ENCODE measurements at regions of chr17 and their contacts with region 1.

Region 1: DNA sequence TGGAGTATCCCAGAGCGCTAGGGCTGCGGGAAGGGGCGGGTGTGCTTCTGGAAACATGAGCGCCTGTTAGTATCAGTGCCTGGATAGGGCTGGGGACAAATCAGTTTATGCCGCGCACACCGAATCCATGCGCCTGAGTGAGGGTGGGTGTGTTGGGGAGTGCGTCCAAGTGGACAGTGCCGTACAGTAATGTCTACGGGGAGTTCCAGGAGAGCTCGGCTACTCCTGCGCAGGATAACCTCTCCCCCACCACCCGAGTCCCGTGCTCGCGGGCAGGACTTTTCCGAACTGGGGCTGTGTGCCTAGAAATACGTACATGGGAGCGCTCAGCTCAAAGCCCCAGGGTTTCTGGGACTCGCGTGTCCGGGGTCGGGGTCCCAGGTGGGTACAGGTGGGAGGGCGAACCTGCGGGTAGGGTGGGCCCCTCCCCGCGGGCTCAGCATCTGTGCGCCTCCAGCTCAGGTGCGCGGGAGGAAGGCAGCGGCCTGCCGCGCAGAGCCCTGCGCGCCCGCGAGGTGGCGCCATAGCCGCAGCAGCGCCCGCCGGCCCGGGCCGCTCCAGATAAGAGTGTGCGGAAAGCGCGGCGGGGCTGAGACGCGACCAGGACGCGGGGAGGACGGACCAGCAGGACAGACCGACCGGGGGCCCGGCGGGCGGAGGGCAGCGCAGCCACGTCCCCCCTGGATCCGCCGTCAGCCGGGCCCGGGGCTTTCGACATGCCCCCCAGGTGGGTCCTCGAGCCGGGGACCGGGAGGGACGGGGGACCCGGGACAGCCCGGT is at the start of gene HIC1:
- DNase-seq: peak; percentile 64 to 88 (median 73)
- ATAC-seq: peak; percentile 45
- H3K4me3 ChIP-seq: peak within 1 kb of the TSS; percentile 48 to 65
- H3K4me3 Mint-ChIP-seq: peak within 1 kb of the TSS; percentile 78
- H3K27ac ChIP-seq: peak within 1 kb of the TSS; percentile 56 to 74
- H3K27ac Mint-ChIP-seq: peak within 1 kb of the TSS; percentile 81
- H3K4me1 ChIP-seq: peaks cover 64% of the 10 kb centered on the region
- H3K4me1 Mint-ChIP-seq: peaks cover 31% of the 10 kb centered on the region
- H3K27me3 ChIP-seq: peaks cover 0 to 2% of the 10 kb centered on the region in 2 experiments
- H3K27me3 Mint-ChIP-seq: peaks cover 13% of the 10 kb centered on the region
- CTCF ChIP-seq: peak; percentile 85
- total RNA-seq, gene HIC1: 12.1 to 13.0 TPM

Region 2: GRCh38 chr17:1546292-1546922 is 508.3 kb before region 1 on chr17:
- CTCF ChIA-PET with region 1: no interaction called
- POLR2A ChIA-PET with region 1: no interaction called
- intact Hi-C with region 1: no loop called
- DNase-seq: no peak
- ATAC-seq: no peak
- H3K4me3 ChIP-seq: no peak overlapping the region
- H3K4me3 Mint-ChIP-seq: no peak overlapping the region
- H3K27ac ChIP-seq: no peak overlapping the region
- H3K27ac Mint-ChIP-seq: no peak overlapping the region
- H3K4me1 ChIP-seq: no peaks in the 10 kb centered on the region
- H3K4me1 Mint-ChIP-seq: no peaks in the 10 kb centered on the region
- H3K27me3 ChIP-seq: no peaks in the 10 kb centered on the region
- H3K27me3 Mint-ChIP-seq: no peaks in the 10 kb centered on the region
- CTCF ChIP-seq: no peak

Region 3: DNA sequence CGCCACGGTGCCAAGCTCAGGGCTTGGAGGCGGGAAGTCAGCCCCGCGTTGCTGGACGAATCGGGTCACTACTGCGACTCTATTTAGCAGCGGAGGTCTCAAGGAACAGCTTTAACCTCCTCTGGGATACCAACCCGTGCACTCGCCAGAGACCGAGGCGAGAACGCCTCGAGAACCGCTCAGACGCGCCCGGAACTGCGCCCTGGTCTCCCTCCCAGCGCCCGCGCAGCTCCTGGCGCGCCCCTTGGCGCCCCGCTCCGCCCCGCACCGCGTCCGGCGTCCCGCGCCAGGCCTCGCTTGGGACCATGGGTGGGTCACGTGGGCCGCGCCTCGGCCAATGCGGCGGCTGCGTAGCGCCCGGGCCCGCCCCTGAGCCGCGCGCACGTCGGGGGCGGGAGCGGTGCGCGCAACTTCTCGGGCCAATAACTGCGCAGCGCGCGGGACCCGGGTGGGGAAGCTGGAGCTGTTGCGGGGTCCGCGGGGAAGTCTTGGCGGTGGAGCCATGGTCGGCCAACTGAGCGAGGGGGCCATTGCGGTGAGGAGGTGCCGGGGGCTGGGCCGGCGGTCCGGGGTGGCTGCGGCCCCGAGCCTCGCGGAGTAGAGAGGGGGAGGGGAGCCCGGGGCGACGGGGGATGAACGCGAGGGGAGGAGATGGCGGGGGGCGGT is 225.0 kb before region 1 on chr17 and contains the starts of genes RPA1 and SMYD4:
- CTCF ChIA-PET with region 1: no interaction called
- POLR2A ChIA-PET with region 1: no interaction called
- intact Hi-C with region 1: no loop called
- DNase-seq: peak; percentile 74 to 95 (median 86)
- ATAC-seq: peak; percentile 96
- H3K4me3 ChIP-seq: peak within 1 kb of the TSS; percentile 81 to 82
- H3K4me3 Mint-ChIP-seq: peak within 1 kb of the TSS; percentile 94
- H3K27ac ChIP-seq: peak within 1 kb of the TSS; percentile 74 to 77
- H3K27ac Mint-ChIP-seq: peak within 1 kb of the TSS; percentile 92
- H3K4me1 ChIP-seq: peaks cover 24% of the 10 kb centered on the region
- H3K4me1 Mint-ChIP-seq: peaks cover 59% of the 10 kb centered on the region
- H3K27me3 ChIP-seq: no peaks in the 10 kb centered on the region
- H3K27me3 Mint-ChIP-seq: no peaks in the 10 kb centered on the region
- CTCF ChIP-seq: no peak
- total RNA-seq, gene RPA1: 35.1 to 38.1 TPM
- total RNA-seq, gene SMYD4: 8.9 to 10.1 TPM

Region 4: GRCh38 chr17:2029911-2030778 is 24.6 kb before region 1 on chr17 and contains the start of gene DPH1:
- CTCF ChIA-PET with region 1: interaction called, 4 read pairs
- POLR2A ChIA-PET with region 1: interaction called, 4 read pairs
- intact Hi-C with region 1: loop called in 1 of 2 experiments (anchors 1 kb)
- DNase-seq: peak; percentile 66 to 92 (median 85)
- ATAC-seq: peak; percentile 81
- H3K4me3 ChIP-seq: peak within 1 kb of the TSS; percentile 93 to 100
- H3K4me3 Mint-ChIP-seq: peak within 1 kb of the TSS; percentile 97
- H3K27ac ChIP-seq: peak within 1 kb of the TSS; percentile 73 to 81
- H3K27ac Mint-ChIP-seq: peak within 1 kb of the TSS; percentile 86
- H3K4me1 ChIP-seq: peaks cover 34% of the 10 kb centered on the region
- H3K4me1 Mint-ChIP-seq: peaks cover 34% of the 10 kb centered on the region
- H3K27me3 ChIP-seq: peaks cover 0 to 18% of the 10 kb centered on the region in 2 experiments
- H3K27me3 Mint-ChIP-seq: peaks cover 12% of the 10 kb centered on the region
- CTCF ChIP-seq: no peak
- total RNA-seq, gene DPH1: 128 to 149 TPM

Region 5: DNA sequence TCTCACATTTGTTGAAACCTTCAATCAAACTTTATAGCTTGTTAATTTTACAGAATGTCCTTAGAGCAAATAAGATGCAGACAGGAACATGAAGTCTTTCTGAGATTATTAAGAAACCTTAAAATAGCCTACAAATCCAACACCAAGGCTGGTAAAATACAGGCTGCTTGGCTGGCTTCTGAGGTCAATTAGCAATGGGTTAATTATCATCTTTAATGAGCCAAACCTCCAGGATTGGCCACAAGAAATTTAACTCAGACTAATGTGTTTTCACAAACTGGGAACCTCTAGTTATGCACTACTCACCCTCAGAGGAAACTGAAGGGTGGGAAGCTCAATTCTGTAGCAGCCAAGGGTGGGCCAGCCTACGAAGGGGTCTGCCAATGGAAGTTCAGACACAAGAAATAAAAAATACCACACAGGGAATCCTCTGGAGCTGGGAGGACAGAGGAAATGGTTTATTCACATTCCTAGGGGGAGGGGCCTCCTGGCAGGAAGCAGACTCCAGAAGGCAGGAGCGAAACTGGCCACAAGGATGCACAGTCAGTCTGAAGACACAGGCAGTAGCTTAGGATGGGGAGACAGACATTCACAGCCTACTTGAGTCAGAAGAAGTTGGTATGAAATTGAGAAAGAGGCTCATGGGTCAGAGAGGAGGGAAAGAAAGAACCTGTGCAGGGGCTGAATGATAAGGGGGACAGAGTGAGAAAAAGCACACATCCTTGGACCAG is 36.3 kb after region 1 on chr17:
- CTCF ChIA-PET with region 1: interaction called, 18 read pairs
- POLR2A ChIA-PET with region 1: interaction called, 7 read pairs
- intact Hi-C with region 1: loop called in 1 of 2 experiments (anchors 1 kb)
- DNase-seq: no peak
- ATAC-seq: no peak
- H3K4me3 ChIP-seq: no peak overlapping the region
- H3K4me3 Mint-ChIP-seq: peak overlapping the region; percentile 92
- H3K27ac ChIP-seq: no peak overlapping the region
- H3K27ac Mint-ChIP-seq: peak overlapping the region; percentile 93
- H3K4me1 ChIP-seq: peaks cover 36% of the 10 kb centered on the region
- H3K4me1 Mint-ChIP-seq: peaks cover 52% of the 10 kb centered on the region
- H3K27me3 ChIP-seq: no peaks in the 10 kb centered on the region
- H3K27me3 Mint-ChIP-seq: no peaks in the 10 kb centered on the region
- CTCF ChIP-seq: no peak

Region 6: GRCh38 chr17:2222901-2223616 is 168.4 kb after region 1 on chr17:
- CTCF ChIA-PET with region 1: interaction called, 11 read pairs
- POLR2A ChIA-PET with region 1: interaction called, 3 read pairs
- intact Hi-C with region 1: no loop called
- DNase-seq: peak; percentile 27 to 94 (median 64)
- ATAC-seq: peak; percentile 89
- H3K4me3 ChIP-seq: peak overlapping the region in 1 of 2 experiments; percentile 3
- H3K4me3 Mint-ChIP-seq: peak overlapping the region; percentile 16
- H3K27ac ChIP-seq: peak overlapping the region in 1 of 2 experiments; percentile 71
- H3K27ac Mint-ChIP-seq: peak overlapping the region; percentile 84
- H3K4me1 ChIP-seq: peaks cover 12% of the 10 kb centered on the region
- H3K4me1 Mint-ChIP-seq: peaks cover 44% of the 10 kb centered on the region
- H3K27me3 ChIP-seq: no peaks in the 10 kb centered on the region
- H3K27me3 Mint-ChIP-seq: no peaks in the 10 kb centered on the region
- CTCF ChIP-seq: no peak

Region 7: GRCh38 chr17:2266045-2266864 is 211.6 kb after region 1 on chr17:
- CTCF ChIA-PET with region 1: interaction called, 99 read pairs
- POLR2A ChIA-PET with region 1: interaction called, 10 read pairs
- intact Hi-C with region 1: loop called (anchors 1 kb)
- DNase-seq: peak; percentile 58 to 97 (median 84)
- ATAC-seq: peak; percentile 79
- H3K4me3 ChIP-seq: peak overlapping the region; percentile 34 to 51
- H3K4me3 Mint-ChIP-seq: peak overlapping the region; percentile 58
- H3K27ac ChIP-seq: peak overlapping the region; percentile 88 to 95
- H3K27ac Mint-ChIP-seq: peak overlapping the region; percentile 96
- H3K4me1 ChIP-seq: peaks cover 86% of the 10 kb centered on the region
- H3K4me1 Mint-ChIP-seq: peaks cover 83% of the 10 kb centered on the region
- H3K27me3 ChIP-seq: no peaks in the 10 kb centered on the region
- H3K27me3 Mint-ChIP-seq: no peaks in the 10 kb centered on the region
- CTCF ChIP-seq: no peak

Region 8: GRCh38 chr17:2303204-2304188 is 248.8 kb after region 1 on chr17 and contains the starts of genes SMG6 and SRR:
- CTCF ChIA-PET with region 1: interaction called, 3 read pairs
- POLR2A ChIA-PET with region 1: no interaction called
- intact Hi-C with region 1: loop called in 1 of 2 experiments (anchors 1 kb)
- DNase-seq: peak; percentile 89 to 98 (median 95)
- ATAC-seq: peak; percentile 91
- H3K4me3 ChIP-seq: peak within 1 kb of the TSS; percentile 95 to 98
- H3K4me3 Mint-ChIP-seq: peak within 1 kb of the TSS; percentile 93
- H3K27ac ChIP-seq: peak within 1 kb of the TSS; percentile 76 to 85
- H3K27ac Mint-ChIP-seq: peak within 1 kb of the TSS; percentile 91
- H3K4me1 ChIP-seq: peaks cover 18% of the 10 kb centered on the region
- H3K4me1 Mint-ChIP-seq: peaks cover 43% of the 10 kb centered on the region
- H3K27me3 ChIP-seq: no peaks in the 10 kb centered on the region
- H3K27me3 Mint-ChIP-seq: no peaks in the 10 kb centered on the region
- CTCF ChIP-seq: no peak
- total RNA-seq, gene SMG6: 36.1 to 37.8 TPM
- total RNA-seq, gene SRR: 1.8 to 2.9 TPM

Measured in CD8-positive, alpha-beta T cell (primary cell).